ENCODE measurements at regions of chr11 and their contacts with region 1.

Region 1: GRCh38 chr11:13343931-13344717 is 66.5 kb downstream of the BMAL1 start:
- DNase-seq: peak; percentile 63 to 68 (median 67)
- H3K4me3 ChIP-seq: no peak overlapping the region
- H3K4me3 Mint-ChIP-seq: no peak overlapping the region
- H3K27ac ChIP-seq: no peak overlapping the region
- H3K27ac Mint-ChIP-seq: peak overlapping the region in 6 of 7 donors; percentile 1 to 85 (median 31)
- H3K4me1 ChIP-seq: peaks cover 30% of the 10 kb centered on the region
- H3K4me1 Mint-ChIP-seq: peaks cover 46 to 85% (median 70%) of the 10 kb centered on the region in 4 donors
- H3K27me3 ChIP-seq: no peaks in the 10 kb centered on the region
- H3K27me3 Mint-ChIP-seq: no peaks in the 10 kb centered on the region

Region 2: GRCh38 chr11:12800032-12800671 is 544.0 kb before region 1 on chr11:
- CTCF ChIA-PET with region 1: no interaction called
- POLR2A ChIA-PET with region 1: no interaction called
- intact Hi-C with region 1: no loop called
- DNase-seq: no peak
- H3K4me3 ChIP-seq: no peak overlapping the region
- H3K4me3 Mint-ChIP-seq: no peak overlapping the region
- H3K27ac ChIP-seq: no peak overlapping the region
- H3K27ac Mint-ChIP-seq: no peak overlapping the region
- H3K4me1 ChIP-seq: no peaks in the 10 kb centered on the region
- H3K4me1 Mint-ChIP-seq: no peaks in the 10 kb centered on the region
- H3K27me3 ChIP-seq: peaks cover 7% of the 10 kb centered on the region
- H3K27me3 Mint-ChIP-seq: peaks cover 17 to 23% of the 10 kb centered on the region in 2 donors

Region 3: DNA sequence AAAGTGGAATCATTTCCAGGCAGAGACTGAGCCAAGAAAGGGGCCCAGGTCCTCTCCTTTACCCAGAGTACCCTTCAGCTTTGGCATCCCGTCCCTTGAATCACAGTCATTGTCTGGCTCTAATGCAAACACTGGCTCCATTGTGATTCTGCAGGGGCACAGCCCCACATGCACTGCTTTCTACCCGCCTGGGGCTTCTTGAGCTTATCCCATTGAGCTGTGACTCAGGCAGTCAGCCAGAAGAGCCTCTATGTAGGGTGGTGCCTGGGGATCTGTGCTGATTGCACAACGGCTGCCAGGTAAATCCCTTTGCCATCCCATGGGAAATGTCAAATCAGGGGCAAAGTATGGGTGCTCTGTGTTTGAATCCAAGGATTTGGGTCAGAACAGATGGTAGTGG is 246.1 kb before region 1 on chr11:
- CTCF ChIA-PET with region 1: no interaction called
- POLR2A ChIA-PET with region 1: no interaction called
- intact Hi-C with region 1: no loop called
- DNase-seq: no peak
- H3K4me3 ChIP-seq: no peak overlapping the region
- H3K4me3 Mint-ChIP-seq: no peak overlapping the region
- H3K27ac ChIP-seq: no peak overlapping the region
- H3K27ac Mint-ChIP-seq: no peak overlapping the region
- H3K4me1 ChIP-seq: no peaks in the 10 kb centered on the region
- H3K4me1 Mint-ChIP-seq: no peaks in the 10 kb centered on the region
- H3K27me3 ChIP-seq: no peaks in the 10 kb centered on the region
- H3K27me3 Mint-ChIP-seq: peaks cover 12 to 14% of the 10 kb centered on the region in 2 donors

Region 4: GRCh38 chr11:13183094-13183825 is 160.9 kb before region 1 on chr11:
- CTCF ChIA-PET with region 1: interaction called, 8 read pairs
- POLR2A ChIA-PET with region 1: no interaction called
- intact Hi-C with region 1: loop called (anchors 1 kb)
- DNase-seq: peak in 4 of 5 donors; percentile 12 to 32 (median 24)
- H3K4me3 ChIP-seq: no peak overlapping the region
- H3K4me3 Mint-ChIP-seq: peak overlapping the region in 7 of 8 donors; percentile 44 to 65 (median 60)
- H3K27ac ChIP-seq: no peak overlapping the region
- H3K27ac Mint-ChIP-seq: no peak overlapping the region
- H3K4me1 ChIP-seq: peaks cover 7% of the 10 kb centered on the region
- H3K4me1 Mint-ChIP-seq: peaks cover 3 to 6% (median 6%) of the 10 kb centered on the region in 4 donors
- H3K27me3 ChIP-seq: no peaks in the 10 kb centered on the region
- H3K27me3 Mint-ChIP-seq: peaks cover 8 to 12% of the 10 kb centered on the region in 2 donors

Region 5: GRCh38 chr11:13238879-13239514 is 105.1 kb before region 1 on chr11:
- CTCF ChIA-PET with region 1: interaction called, 17 read pairs
- POLR2A ChIA-PET with region 1: no interaction called
- intact Hi-C with region 1: no loop called
- DNase-seq: peak; percentile 45 to 61 (median 54)
- H3K4me3 ChIP-seq: no peak overlapping the region
- H3K4me3 Mint-ChIP-seq: no peak overlapping the region
- H3K27ac ChIP-seq: no peak overlapping the region
- H3K27ac Mint-ChIP-seq: peak overlapping the region in 1 of 7 donors; percentile 63
- H3K4me1 ChIP-seq: no peaks in the 10 kb centered on the region
- H3K4me1 Mint-ChIP-seq: peaks cover 0 to 3% (median 1%) of the 10 kb centered on the region in 4 donors
- H3K27me3 ChIP-seq: peaks cover 8% of the 10 kb centered on the region
- H3K27me3 Mint-ChIP-seq: peaks cover 7 to 15% of the 10 kb centered on the region in 2 donors

Region 6: DNA sequence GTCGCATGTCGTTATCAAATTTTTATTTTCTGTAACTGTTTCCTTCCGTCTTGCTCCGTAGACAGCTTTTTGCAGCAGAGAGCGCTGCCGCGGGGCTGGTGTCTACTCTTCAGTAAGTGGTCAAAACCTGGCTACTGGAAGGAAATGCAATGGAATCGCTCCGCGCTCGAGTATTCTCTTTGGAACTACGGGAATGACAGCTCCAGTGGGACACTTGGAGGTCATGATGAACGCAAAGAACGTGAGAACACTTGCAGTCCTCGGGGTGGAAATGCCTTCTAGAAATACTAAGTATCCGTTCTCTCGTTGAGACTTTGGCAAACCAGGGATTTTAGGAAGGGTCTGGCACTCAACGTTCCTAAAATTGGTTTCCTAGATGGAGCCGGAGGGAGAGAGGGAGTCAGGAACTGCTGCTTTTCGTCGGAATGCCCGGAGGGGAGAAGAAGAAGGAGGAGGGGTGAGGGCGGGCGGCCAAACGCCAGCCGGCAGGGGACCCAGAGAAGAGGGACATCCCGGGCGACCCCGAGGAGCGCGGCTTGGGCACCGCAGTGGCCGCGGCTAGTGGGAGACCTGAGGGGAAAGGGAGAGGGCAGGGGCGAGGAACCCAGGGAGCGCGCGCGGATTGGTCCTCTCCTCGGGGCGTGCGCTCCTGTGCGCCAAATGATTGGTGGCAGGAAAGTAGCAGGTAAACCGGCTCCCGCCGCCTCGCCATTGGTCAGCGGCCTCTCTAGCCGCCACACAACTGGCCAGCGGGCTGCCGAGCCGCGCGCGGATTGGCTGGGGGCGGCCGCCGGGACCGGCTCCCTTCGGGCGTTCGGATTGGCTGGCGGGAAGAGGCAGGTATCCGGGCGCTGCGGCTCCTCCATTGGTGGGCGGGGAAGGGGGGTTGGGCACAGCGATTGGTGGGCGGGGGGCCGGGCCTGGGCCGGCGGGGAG is 67.0 kb before region 1 on chr11:
- CTCF ChIA-PET with region 1: interaction called, 17 read pairs
- POLR2A ChIA-PET with region 1: interaction called, 3 read pairs
- intact Hi-C with region 1: loop called (anchors 2 kb)
- DNase-seq: peak; percentile 97 to 98 (median 98)
- H3K4me3 ChIP-seq: peak overlapping the region; percentile 83 to 95
- H3K4me3 Mint-ChIP-seq: peak overlapping the region; percentile 93 to 100 (median 98)
- H3K27ac ChIP-seq: peak overlapping the region; percentile 80
- H3K27ac Mint-ChIP-seq: peak overlapping the region; percentile 94 to 99 (median 96)
- H3K4me1 ChIP-seq: peaks cover 42% of the 10 kb centered on the region
- H3K4me1 Mint-ChIP-seq: peaks cover 33 to 52% (median 42%) of the 10 kb centered on the region in 4 donors
- H3K27me3 ChIP-seq: peaks cover 5% of the 10 kb centered on the region
- H3K27me3 Mint-ChIP-seq: peaks cover 0 to 2% of the 10 kb centered on the region in 2 donors

Measured in CD4-positive, alpha-beta memory T cell (primary cell).